Activated CD4-positive, alpha-beta T cell treated with anti-CD3 and anti-CD28 coated beads for 36 hours (primary cell): ENCODE measurements at regions of chr18 and their contacts with region 1.

Region 1: DNA sequence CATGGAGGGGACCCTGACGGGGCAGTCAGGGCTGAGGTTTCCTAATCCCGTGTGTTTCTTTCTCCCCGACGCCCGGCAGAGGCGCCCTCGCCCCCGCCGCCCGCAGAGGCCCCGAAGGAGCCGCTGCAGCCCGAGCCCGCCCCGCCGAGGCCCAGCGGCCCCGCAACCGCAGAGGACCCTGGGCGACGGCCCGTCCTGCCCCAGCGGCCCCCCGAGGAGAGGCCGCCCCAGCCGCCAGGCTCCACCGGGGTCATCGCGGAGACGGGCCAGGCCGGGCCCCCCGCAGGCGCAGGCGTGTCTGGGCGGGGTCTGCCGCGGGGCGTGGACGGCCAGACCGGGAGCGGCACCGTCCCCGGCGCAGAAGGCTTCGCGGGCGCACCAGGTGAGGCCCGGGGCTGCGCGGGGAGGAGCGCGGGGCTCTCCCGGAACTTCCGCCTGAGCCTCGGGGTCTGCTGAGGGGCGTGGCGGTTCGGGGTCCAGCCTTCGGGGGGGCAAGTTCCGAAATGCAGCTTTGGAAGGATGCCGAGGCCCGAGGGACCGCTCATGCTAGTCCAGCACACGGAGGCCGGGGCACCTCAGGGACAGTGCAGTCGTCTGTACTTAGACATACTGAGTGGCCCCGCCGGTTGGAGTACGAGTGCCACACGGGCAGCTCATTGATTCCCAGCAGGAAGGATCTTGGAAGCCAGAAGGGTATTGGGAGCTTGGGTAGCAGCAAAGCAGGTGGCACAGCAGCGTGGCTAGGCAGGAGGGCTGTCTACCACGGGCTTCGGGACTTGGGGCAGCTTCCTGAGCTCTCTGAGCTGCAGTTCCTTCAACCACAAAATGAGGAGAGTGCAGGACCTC is 60.1 kb downstream of the EMILIN2 start:
- DNase-seq: peak; percentile 63
- ATAC-seq: peak; percentile 67
- H3K4me3 Mint-ChIP-seq: peak overlapping the region; percentile 78
- H3K27ac Mint-ChIP-seq: peak overlapping the region; percentile 72
- H3K4me1 Mint-ChIP-seq: peaks cover 17% of the 10 kb centered on the region
- H3K27me3 Mint-ChIP-seq: no peaks in the 10 kb centered on the region

Region 2: DNA sequence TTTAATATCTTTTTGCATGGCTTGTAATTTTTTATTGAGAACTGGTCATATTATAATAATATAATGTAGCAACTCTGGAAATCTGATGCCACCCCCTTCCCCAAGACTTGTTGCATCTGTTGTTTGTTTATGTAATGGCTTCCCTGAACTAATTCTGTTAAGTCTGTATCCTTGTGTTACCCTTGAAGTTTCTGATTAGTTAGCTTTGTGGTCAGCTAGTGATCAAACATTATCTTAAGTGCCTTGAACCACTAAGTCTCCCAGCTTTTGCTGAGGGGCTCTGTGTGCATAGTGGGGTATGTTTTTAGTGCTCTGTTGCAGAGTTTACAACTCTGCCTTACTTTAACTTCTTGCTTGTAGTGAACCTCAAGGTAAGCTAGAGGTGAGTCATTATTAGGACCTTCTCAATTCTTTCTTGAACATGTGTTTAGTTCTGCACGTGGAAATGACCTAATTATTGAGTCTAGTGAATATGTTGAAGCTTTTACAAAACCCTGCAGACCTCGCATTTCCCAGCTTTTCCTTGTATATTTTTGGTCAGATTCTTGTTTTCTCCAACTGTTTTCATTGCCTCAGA is 226.6 kb before region 1 on chr18:
- CTCF ChIA-PET with region 1: no interaction called
- POLR2A ChIA-PET with region 1: no interaction called
- intact Hi-C with region 1: no loop called
- DNase-seq: no peak
- ATAC-seq: no peak
- H3K4me3 Mint-ChIP-seq: no peak overlapping the region
- H3K27ac Mint-ChIP-seq: peak overlapping the region; percentile 37
- H3K4me1 Mint-ChIP-seq: peaks cover 54% of the 10 kb centered on the region
- H3K27me3 Mint-ChIP-seq: no peaks in the 10 kb centered on the region

Region 3: GRCh38 chr18:2774669-2775068 is 132.3 kb before region 1 on chr18:
- CTCF ChIA-PET with region 1: no interaction called
- POLR2A ChIA-PET with region 1: no interaction called
- intact Hi-C with region 1: loop called in 1 of 2 experiments (anchors 5 kb)
- DNase-seq: no peak
- ATAC-seq: no peak
- H3K4me3 Mint-ChIP-seq: no peak overlapping the region
- H3K27ac Mint-ChIP-seq: no peak overlapping the region
- H3K4me1 Mint-ChIP-seq: peaks cover 8% of the 10 kb centered on the region
- H3K27me3 Mint-ChIP-seq: no peaks in the 10 kb centered on the region

Region 4: GRCh38 chr18:2805970-2806943 is 100.7 kb before region 1 on chr18:
- CTCF ChIA-PET with region 1: interaction called, 3 read pairs
- POLR2A ChIA-PET with region 1: no interaction called
- intact Hi-C with region 1: loop called in 1 of 2 experiments (anchors 5 kb)
- DNase-seq: no peak
- ATAC-seq: no peak
- H3K4me3 Mint-ChIP-seq: no peak overlapping the region
- H3K27ac Mint-ChIP-seq: peak overlapping the region; percentile 5
- H3K4me1 Mint-ChIP-seq: no peaks in the 10 kb centered on the region
- H3K27me3 Mint-ChIP-seq: no peaks in the 10 kb centered on the region

Region 5: DNA sequence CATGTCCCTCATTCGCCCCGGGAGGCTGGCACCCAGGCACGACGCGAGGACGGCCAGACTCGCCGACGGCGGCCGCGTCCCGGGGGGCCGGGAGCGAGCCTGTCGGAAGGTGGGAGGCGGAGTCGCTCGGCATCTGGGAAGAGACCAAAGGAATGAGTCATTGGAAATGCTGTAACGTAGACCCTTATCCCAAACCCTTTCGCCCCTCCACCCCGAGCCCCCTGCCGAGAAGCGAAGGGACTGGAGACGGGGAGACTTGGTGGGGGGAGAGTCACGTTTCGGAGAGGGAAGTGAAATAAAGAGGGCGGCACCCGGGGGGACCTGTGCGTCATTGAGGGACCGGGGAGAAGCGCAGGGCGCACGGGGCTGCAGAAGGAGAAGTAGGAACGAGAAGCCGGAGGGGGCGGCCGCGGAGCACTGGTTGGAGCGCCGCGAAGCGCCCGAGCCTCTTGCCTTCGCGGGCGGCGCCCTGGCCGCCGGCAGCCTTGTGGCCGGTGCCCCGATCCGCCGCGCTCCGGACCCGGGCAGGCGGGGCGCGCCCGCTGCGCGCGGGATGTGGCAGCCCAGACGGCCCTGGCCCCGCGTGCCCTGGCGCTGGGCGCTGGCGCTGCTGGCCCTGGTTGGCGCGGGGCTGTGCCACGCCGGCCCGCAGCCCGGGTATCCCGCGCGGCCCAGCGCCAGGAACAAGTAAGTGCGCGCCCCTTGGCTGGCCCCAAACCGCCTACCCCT is 60.1 kb before region 1 on chr18 and contains the start of gene EMILIN2:
- CTCF ChIA-PET with region 1: no interaction called
- POLR2A ChIA-PET with region 1: no interaction called
- intact Hi-C with region 1: loop called (anchors 1 to 5 kb)
- DNase-seq: peak; percentile 73
- ATAC-seq: peak; percentile 21
- H3K4me3 Mint-ChIP-seq: peak within 1 kb of the TSS; percentile 76
- H3K27ac Mint-ChIP-seq: peak within 1 kb of the TSS; percentile 64
- H3K4me1 Mint-ChIP-seq: peaks cover 36% of the 10 kb centered on the region
- H3K27me3 Mint-ChIP-seq: peaks cover 34% of the 10 kb centered on the region
- total RNA-seq, gene EMILIN2: 12.0 to 15.7 TPM

Region 6: DNA sequence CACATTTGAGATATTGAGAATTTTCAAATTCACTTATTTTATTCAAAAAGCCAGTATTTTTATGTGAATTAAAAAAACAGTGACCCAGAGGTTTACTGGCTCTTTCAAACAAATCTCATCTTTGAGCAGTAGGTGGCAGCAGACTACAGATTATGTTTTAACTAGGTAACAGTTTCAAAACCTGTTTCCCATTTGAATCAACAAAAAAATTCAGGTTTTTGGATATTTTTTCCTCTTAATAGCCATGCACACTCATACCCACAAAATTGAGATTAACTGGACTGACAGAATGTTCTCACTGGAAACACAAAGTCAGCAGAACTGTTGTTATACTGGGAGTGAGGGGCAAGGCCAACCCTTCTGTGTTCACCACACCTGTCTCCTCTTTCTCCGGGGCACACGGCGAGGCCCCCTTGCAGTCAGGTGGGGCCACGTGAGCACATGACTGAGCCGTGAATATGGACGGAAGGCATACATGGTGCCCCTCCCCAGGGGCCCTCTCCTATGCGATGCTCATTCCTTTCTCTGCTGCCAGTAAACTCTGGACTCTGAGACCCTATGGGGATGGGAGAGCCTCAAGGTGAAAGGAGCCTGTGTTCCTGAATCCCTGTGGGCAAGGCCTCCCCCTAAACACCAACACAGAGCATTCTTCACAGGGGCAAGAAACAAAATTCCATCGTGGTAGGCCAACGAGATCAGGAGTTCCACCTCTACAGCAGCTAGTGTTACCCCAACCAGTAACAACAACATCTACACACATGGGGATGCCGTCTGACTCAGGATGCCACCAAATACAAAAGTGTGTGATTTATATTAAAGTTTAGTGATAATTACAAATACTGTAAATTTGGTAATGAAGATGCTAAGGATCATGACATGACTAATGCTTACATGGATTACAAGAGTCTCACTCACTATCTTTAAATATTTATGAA is 25.6 kb after region 1 on chr18:
- CTCF ChIA-PET with region 1: no interaction called
- POLR2A ChIA-PET with region 1: no interaction called
- intact Hi-C with region 1: no loop called
- DNase-seq: peak; percentile 50
- ATAC-seq: peak; percentile 60
- H3K4me3 Mint-ChIP-seq: no peak overlapping the region
- H3K27ac Mint-ChIP-seq: peak overlapping the region; percentile 81
- H3K4me1 Mint-ChIP-seq: peaks cover 41% of the 10 kb centered on the region
- H3K27me3 Mint-ChIP-seq: no peaks in the 10 kb centered on the region

Region 7: DNA sequence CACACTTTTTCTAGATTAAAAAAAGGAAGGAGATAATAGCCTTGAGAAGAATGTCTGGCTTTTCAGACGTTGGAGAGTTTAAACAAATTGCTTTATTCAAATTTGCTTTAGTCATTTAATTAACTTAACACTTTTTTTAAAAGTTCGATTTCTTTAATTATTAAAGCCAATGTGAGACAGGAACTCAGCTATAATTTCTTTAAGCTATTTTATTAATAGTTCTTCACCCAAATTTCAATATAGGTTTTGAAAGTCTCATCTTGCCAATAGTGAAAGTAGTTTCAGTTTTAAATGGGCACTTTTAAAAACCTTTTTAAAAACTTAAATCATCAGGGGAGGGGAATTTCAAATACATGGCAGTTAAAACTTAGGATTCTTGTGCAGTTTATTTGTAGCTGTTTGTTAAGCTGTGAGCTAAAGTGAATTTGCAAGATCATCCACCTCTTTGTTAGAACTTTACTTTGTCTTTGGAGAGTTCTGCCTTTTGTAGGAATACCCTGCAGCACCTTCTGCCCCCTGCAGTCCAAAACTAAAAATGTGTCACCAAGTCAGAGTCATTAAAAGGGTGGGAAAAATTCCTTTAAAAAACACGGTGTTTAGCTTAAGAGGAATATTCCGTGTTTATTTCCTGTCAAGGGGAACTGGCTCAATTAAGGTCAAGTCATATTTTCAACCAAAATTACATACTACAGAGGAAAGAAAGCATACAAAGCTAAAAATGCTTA is 547.6 kb after region 1 on chr18:
- CTCF ChIA-PET with region 1: no interaction called
- POLR2A ChIA-PET with region 1: no interaction called
- intact Hi-C with region 1: no loop called
- DNase-seq: peak; percentile 40
- ATAC-seq: no peak
- H3K4me3 Mint-ChIP-seq: peak overlapping the region; percentile 94
- H3K27ac Mint-ChIP-seq: peak overlapping the region; percentile 99
- H3K4me1 Mint-ChIP-seq: peaks cover 67% of the 10 kb centered on the region
- H3K27me3 Mint-ChIP-seq: no peaks in the 10 kb centered on the region

Region 8: DNA sequence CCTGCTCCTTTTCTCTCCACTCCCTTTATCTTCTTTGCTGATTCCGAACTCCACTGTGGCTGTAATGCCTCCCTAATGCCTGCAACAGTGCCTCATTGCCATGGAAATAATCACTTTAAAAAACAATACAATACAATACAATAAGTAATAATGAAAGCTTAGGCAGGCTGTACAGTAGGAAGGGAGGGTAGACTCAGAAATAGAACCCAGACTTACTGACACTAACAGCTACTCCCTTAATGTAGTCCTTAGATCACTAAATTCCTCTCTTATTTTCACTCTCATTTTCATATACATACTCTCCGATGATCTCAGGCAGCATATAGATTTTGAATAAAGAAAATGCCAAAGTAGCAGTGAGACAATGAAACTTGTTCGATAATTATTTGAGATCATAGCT is 1478.0 kb after region 1 on chr18:
- CTCF ChIA-PET with region 1: no interaction called
- POLR2A ChIA-PET with region 1: no interaction called
- intact Hi-C with region 1: no loop called
- DNase-seq: no peak
- ATAC-seq: no peak
- H3K4me3 Mint-ChIP-seq: no peak overlapping the region
- H3K27ac Mint-ChIP-seq: no peak overlapping the region
- H3K4me1 Mint-ChIP-seq: no peaks in the 10 kb centered on the region
- H3K27me3 Mint-ChIP-seq: no peaks in the 10 kb centered on the region